ENCODE measurements at regions of chr2 and their contacts with region 1.

Region 1: GRCh38 chr2:108145557-108146326 is 94.0 kb upstream of the SULT1C3 start:
- DNase-seq: no peak

Region 2: GRCh38 chr2:107627164-107627563 is 518.6 kb before region 1 on chr2:
- intact Hi-C with region 1: loop called in 1 of 2 experiments (anchors 5 kb)
- DNase-seq: no peak

Region 3: DNA sequence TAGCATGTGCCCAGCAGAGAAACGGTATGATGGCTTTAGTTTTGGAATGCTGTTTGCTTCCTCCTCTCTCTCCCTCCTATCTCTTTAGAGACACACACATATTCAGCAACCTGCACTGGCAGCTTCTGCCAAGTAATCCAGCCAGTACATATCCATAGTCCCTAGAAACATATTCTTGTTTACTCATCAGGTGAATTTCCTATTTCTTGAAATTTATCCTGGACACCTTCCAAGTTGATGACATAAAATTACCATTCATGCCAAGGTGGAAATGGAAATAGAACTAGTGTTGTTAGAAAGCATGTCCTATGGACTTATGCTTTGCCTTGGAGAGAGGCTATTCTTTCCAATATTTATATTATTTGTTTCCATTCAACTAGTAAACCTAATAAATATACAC is 370.0 kb before region 1 on chr2:
- intact Hi-C with region 1: loop called in 1 of 2 experiments (anchors 5 kb)
- DNase-seq: no peak